PC-9 (cell line): ENCODE measurements at regions of chr5 and their contacts with region 1.

Region 1: GRCh38 chr5:112958093-112959088 is 18.2 kb upstream of the DCP2 start:
- DNase-seq: peak; percentile 66 to 93
- H3K4me3 ChIP-seq: no peak overlapping the region
- H3K27ac ChIP-seq: peak overlapping the region; percentile 63
- H3K4me1 ChIP-seq: peaks cover 46% of the 10 kb centered on the region
- H3K27me3 ChIP-seq: no peaks in the 10 kb centered on the region
- CTCF ChIP-seq: no peak

Region 2: GRCh38 chr5:112860929-112861637 is 97.3 kb before region 1 on chr5 and contains the start of gene SRP19:
- CTCF ChIA-PET with region 1: no interaction called
- POLR2A ChIA-PET with region 1: no interaction called
- intact Hi-C with region 1: loop called (anchors 1 kb)
- DNase-seq: peak; percentile 88 to 93
- H3K4me3 ChIP-seq: peak within 1 kb of the TSS; percentile 84
- H3K27ac ChIP-seq: peak within 1 kb of the TSS; percentile 69
- H3K4me1 ChIP-seq: peaks cover 20% of the 10 kb centered on the region
- H3K27me3 ChIP-seq: no peaks in the 10 kb centered on the region
- CTCF ChIP-seq: no peak
- total RNA-seq, gene SRP19: 26.8 and 34.4 TPM in 2 replicates

Region 3: DNA sequence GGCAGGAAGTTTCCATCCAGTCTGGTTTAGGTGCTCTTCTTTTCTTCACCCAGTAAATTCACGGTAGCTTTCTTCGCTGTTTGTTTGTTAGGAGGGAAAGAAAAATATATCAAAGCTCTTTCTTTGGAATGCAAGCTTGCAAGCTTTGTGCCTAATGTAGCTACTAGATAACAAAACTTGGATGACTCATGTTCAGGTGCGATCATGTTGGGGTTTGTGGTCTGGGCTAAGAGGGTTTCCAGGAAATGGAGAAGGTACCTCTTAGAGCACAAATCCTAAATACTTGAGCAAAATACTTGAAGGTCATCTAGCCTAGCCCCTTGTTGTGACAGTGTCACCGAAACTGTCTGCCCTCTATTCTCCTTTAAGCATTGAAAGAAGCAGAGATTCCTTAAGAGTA is 79.6 kb before region 1 on chr5:
- CTCF ChIA-PET with region 1: no interaction called
- POLR2A ChIA-PET with region 1: no interaction called
- intact Hi-C with region 1: loop called (anchors 5 kb)
- DNase-seq: peak; percentile 43 to 90
- H3K4me3 ChIP-seq: no peak overlapping the region; the same call in 1 of the 2 replicates
- H3K27ac ChIP-seq: peak overlapping the region; percentile 48
- H3K4me1 ChIP-seq: peaks cover 26% of the 10 kb centered on the region
- H3K27me3 ChIP-seq: no peaks in the 10 kb centered on the region
- CTCF ChIP-seq: no peak

Region 4: DNA sequence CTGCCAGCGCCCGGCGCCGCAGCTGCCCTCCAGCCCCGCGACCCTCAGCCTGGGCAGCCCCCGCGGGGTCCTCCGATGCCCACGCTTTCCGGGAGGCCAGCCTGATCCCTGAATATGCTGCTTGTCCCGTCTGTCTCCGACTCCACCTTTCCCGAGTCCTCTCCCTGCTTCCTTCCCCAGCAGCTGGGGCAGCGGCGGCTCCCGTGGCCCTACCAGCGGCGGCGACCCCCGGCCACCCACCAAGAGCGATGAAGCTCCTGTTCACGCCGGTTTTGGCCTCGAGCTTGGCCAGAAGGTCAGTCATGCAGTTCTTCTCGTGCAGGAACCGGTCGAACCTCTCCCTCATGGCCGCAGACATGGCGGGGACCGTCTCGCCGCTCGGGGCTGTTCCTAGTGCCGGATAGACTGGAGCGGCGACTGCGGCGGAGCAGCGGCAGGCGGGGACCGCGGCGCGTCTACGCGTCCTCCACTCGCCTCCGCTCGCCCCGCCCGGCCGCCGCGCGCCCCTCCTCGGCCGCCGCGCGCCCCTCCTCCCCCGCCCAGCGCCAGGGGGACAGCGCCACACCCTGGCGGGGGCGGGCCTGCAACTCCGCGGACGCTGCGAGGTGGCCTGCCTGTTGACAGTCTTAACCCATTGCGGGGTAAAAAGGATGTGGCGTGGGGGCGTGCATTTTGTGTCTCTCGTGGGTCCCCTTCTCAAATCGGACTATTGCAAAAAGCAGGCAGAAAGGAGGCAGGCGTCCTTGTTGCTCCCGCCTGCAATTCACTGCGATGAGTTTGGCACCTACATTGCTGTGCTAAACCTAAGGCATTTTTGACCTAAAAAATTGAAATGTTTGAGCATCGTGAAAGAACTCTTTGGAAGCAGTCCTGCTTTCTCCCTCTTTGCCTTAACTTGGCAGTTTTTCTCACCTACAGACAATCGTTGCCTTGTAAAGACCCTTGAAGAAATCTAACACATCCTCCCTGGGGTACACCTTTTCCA is 36.3 kb before region 1 on chr5 and contains the start of gene REEP5:
- CTCF ChIA-PET with region 1: interaction called, 6 read pairs
- POLR2A ChIA-PET with region 1: interaction called, 6 read pairs
- intact Hi-C with region 1: loop called (anchors 1 kb)
- DNase-seq: peak; percentile 66 to 85
- H3K4me3 ChIP-seq: peak within 1 kb of the TSS; percentile 97
- H3K27ac ChIP-seq: peak within 1 kb of the TSS; percentile 53
- H3K4me1 ChIP-seq: peaks cover 7% of the 10 kb centered on the region; the same call in 1 of the 2 replicates
- H3K27me3 ChIP-seq: no peaks in the 10 kb centered on the region
- CTCF ChIP-seq: peak; percentile 57
- total RNA-seq, gene REEP5: 45.2 and 53.6 TPM in 2 replicates

Region 5: DNA sequence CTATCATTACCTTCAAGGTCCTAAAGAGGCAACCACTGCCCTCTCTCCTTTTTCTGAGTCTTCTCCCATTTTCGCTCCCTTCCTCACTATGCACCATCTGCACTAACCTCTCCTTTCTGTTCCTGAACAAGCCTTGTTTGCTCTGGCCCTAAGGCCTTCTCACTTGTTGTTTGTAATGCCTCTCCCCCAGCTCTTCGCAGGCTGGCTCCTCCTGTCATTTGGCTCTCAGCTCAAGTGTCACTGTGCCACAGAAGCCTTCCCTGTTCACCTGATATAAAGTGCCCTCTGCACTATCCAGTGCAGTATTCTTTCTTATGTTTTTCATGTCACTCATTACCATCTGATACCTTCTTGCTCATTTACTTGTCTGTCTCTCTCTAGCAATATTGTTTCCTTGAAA is 1707.2 kb after region 1 on chr5:
- CTCF ChIA-PET with region 1: no interaction called
- POLR2A ChIA-PET with region 1: no interaction called
- intact Hi-C with region 1: no loop called
- DNase-seq: no peak
- H3K4me3 ChIP-seq: no peak overlapping the region
- H3K27ac ChIP-seq: no peak overlapping the region
- H3K4me1 ChIP-seq: no peaks in the 10 kb centered on the region
- H3K27me3 ChIP-seq: no peaks in the 10 kb centered on the region
- CTCF ChIP-seq: no peak